ENCODE measurements at regions of chr21 and their contacts with region 1.

Region 1: DNA sequence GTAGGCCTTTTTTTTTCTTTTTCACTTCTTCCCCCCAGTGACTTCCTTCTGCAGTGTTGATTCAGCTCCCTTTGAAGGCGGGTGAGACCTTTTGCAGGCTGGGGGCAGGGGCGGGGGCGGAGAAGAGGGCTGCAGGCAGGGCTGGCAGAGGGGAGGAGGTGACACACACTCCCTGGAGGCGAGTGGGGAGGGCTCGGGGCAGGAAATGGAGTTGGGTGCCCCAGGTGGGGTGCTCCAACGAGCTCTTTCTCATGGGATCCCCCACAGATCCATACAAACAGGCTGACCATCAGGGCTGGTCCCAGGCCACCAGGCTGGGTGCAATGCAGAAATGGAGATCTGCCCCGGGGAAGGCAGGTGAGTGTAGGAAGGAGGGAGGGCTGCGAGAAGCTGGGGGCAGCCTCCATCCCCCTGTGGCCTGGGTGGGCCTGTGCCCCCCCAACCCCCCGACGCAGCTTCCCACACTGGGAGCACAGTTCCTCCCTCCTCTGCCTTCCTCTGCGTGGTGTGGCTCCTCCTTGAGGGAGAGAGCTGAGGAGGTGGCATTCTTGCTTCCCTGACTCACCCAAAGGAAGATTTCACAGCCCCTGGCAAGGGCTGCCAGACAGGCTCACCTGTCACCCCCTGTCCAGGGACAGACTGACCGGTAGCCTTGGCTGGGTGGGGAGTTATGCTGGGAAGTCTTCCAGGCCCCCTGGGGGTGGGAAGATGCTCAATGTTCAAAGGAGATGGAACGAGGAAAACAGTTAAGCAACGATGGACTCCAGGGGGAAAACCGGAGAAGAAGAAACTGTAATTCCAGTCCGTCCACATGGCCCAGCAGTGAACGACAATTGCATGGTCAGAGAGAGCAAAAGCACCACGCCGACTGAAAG is 7.1 kb upstream of the ITGB2 start:
- DNase-seq: peak; percentile 89
- H3K4me3 Mint-ChIP-seq: peak overlapping the region; percentile 94
- H3K27ac Mint-ChIP-seq: peak overlapping the region; percentile 98
- H3K4me1 Mint-ChIP-seq: peaks cover 77% of the 10 kb centered on the region
- H3K27me3 Mint-ChIP-seq: no peaks in the 10 kb centered on the region

Region 2: DNA sequence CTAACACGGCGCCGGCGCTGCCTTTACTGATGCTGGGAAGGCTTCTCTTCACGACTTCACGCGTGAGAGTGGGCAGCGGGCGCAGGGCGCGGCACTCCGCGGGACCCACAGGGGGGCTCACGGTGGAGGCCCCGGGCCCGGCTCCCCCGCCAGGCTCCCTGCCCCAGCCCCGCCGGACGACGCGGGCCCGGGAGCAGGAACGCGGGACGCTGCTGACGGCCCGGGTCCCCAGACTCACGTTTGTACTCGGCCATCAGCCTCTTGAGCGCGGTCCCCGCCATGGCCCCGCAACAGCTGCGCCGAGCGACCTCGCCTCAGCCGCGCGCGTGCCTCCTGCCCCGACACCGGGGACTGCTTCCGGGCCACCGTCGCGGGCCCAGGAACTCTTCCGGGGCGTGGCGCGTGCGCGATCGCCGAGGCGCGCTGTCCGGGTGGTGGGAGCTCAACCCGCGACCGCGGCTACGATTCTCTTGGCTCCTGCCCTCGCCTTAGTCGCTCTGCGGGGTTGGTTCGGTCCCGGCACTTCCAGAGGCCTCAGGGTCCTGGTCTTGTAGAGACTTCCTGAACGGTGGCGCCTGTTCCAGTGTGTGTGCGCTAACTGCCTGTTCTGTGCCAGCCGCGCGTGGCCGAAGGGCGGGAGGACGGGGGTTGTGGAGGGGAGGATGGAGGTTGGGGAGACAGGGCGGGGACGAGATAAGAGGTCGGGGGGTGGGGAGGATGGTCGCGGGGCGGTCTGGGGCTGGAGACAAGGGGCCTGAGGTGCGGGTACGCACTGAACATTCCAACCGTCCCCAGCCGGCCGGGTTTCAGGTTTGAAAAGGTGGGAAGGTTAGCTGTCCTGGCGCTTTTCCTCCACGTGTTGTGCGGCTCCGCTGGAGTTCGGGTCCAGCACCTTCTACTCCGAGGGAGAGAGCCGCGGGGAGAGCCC is 126.1 kb before region 1 on chr21 and contains the start of gene UBE2G2:
- CTCF ChIA-PET with region 1: interaction called, 28 read pairs
- POLR2A ChIA-PET with region 1: interaction called, 23 read pairs
- DNase-seq: peak; percentile 87
- H3K4me3 Mint-ChIP-seq: peak within 1 kb of the TSS; percentile 88
- H3K27ac Mint-ChIP-seq: peak within 1 kb of the TSS; percentile 80
- H3K4me1 Mint-ChIP-seq: peaks cover 43% of the 10 kb centered on the region
- H3K27me3 Mint-ChIP-seq: no peaks in the 10 kb centered on the region
- total RNA-seq, gene UBE2G2: 70.7 to 74.0 TPM

Region 3: DNA sequence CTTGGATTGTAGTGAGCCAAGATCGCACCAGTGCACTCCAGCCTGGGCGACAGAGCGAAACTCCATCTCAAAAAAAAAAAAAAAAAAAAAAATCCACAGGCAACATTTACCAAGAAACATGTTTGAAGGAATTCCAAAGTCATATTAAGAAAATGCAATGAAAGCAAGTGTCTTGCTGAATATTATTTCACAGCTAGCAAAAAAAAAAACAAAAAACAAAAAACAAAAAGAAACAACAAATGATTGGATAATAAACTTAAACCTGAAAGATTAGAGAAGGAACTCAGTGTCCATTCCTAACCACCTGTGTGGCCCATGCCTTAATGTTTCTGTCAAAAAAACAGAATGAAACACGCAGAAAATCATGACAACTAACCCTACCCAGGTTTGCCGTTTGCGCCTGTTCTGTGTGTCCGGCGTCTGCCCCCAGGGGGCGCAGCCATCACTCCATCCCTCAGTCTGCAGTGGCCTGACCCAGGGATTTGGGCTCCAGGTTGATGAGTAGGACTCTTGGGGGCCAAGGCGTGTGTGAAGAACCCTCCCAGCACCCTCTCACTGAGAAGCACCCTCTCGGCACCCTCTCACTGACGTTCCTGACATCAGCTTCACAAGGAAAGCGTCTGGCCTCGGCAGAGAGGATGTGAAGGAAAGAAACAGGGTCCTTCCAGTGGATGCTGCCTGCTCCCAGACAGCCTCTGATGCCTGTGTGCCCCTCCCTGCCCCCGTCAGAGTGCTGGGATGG is 35.1 kb before region 1 on chr21:
- CTCF ChIA-PET with region 1: interaction called, 30 read pairs
- POLR2A ChIA-PET with region 1: interaction called, 18 read pairs
- DNase-seq: peak; percentile 81
- H3K4me3 Mint-ChIP-seq: no peak overlapping the region
- H3K27ac Mint-ChIP-seq: peak overlapping the region; percentile 44
- H3K4me1 Mint-ChIP-seq: peaks cover 12% of the 10 kb centered on the region
- H3K27me3 Mint-ChIP-seq: no peaks in the 10 kb centered on the region

Region 4: GRCh38 chr21:44911389-44912157 is 16.3 kb before region 1 on chr21:
- CTCF ChIA-PET with region 1: interaction called, 20 read pairs
- POLR2A ChIA-PET with region 1: interaction called, 203 read pairs
- DNase-seq: peak; percentile 79
- H3K4me3 Mint-ChIP-seq: peak overlapping the region; percentile 74
- H3K27ac Mint-ChIP-seq: peak overlapping the region; percentile 89
- H3K4me1 Mint-ChIP-seq: peaks cover 70% of the 10 kb centered on the region
- H3K27me3 Mint-ChIP-seq: no peaks in the 10 kb centered on the region

Region 5: DNA sequence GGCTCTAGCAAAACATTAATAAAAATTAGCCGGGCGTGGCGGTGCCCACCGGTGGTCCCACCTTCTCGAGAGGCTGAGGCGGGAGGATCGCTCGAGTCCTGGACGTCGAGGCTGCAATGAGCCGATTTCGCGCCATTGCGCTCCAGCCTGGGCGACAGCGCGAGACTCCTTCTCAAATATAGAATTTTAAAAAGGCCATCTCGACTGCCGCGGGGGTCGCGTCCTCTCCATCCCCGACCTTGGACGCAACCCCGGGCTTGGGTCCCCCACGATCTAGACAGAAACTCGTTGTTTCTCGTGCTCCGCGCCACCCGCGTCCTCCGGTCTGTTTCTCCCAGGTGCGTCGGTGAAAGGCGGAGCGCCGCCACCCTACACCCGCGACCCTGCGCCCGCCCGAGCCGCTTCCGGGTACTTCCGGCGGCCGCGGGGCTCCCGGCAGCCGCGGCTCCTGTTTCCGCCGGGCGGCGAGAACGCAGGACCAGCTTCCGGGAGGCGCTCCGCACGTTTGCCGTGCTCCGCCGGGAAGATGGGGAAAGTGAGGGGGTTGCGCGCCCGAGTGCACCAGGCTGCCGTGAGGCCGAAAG is 11.8 kb after region 1 on chr21 and contains the start of gene SLX9:
- CTCF ChIA-PET with region 1: interaction called, 5 read pairs
- POLR2A ChIA-PET with region 1: interaction called, 11 read pairs
- DNase-seq: peak; percentile 81
- H3K4me3 Mint-ChIP-seq: peak within 1 kb of the TSS; percentile 86
- H3K27ac Mint-ChIP-seq: peak within 1 kb of the TSS; percentile 73
- H3K4me1 Mint-ChIP-seq: peaks cover 53% of the 10 kb centered on the region
- H3K27me3 Mint-ChIP-seq: no peaks in the 10 kb centered on the region
- total RNA-seq, gene SLX9: 42.4 to 47.0 TPM

Region 6: DNA sequence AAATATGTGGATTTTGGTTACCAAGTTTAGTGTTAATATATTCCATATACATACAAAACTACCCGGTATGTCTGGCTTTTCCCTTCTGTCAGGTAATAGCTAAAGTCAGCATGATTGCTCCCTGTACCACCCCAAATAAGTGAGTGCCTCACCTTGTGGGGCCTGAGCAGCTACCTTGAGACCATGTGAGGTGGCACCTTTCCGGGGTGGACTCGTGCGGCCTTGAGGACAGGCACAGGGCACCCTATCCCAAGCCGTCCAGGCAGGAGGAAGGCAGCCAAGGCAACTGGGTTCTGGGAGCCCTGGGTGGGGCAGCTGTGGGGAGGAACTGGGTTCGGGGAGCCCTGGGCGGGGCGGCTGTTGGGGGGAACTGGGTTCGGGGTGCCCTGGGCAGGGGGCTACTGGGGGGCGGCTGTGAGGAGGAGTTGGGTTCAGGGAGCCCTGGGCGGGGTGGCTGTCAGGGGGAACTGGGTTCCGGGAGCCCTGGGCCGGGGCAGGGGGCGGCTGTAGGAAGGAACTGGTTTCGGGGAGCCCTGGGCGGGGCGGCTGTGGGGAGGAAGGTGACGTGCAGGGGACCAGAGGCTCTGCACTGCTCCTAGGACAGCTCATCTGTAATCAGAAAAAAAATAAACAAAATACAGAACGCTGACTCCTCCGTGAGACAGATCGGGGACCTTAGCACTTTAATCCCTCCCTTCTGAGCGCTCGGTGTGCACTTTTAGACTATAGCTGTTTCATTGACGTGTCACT is 296.5 kb after region 1 on chr21:
- CTCF ChIA-PET with region 1: no interaction called
- POLR2A ChIA-PET with region 1: no interaction called
- DNase-seq: peak; percentile 88
- H3K4me3 Mint-ChIP-seq: peak overlapping the region; percentile 36
- H3K27ac Mint-ChIP-seq: peak overlapping the region; percentile 91
- H3K4me1 Mint-ChIP-seq: peaks cover 84% of the 10 kb centered on the region
- H3K27me3 Mint-ChIP-seq: peaks cover 2% of the 10 kb centered on the region